Activated T-helper 2 cell treated with anti-CD3 and anti-CD28 coated beads, Interferon-gamma antibody, Interleukin-2, Interleukin-4, amounts not matched to agents 10 μg/mL and 5 μg/mL and 100 μg/mL, durations not matched to agents 14 hours and 24 hours and 36 hours (primary cell): ENCODE measurements at regions of chr5 and their contacts with region 1.

Region 1: DNA sequence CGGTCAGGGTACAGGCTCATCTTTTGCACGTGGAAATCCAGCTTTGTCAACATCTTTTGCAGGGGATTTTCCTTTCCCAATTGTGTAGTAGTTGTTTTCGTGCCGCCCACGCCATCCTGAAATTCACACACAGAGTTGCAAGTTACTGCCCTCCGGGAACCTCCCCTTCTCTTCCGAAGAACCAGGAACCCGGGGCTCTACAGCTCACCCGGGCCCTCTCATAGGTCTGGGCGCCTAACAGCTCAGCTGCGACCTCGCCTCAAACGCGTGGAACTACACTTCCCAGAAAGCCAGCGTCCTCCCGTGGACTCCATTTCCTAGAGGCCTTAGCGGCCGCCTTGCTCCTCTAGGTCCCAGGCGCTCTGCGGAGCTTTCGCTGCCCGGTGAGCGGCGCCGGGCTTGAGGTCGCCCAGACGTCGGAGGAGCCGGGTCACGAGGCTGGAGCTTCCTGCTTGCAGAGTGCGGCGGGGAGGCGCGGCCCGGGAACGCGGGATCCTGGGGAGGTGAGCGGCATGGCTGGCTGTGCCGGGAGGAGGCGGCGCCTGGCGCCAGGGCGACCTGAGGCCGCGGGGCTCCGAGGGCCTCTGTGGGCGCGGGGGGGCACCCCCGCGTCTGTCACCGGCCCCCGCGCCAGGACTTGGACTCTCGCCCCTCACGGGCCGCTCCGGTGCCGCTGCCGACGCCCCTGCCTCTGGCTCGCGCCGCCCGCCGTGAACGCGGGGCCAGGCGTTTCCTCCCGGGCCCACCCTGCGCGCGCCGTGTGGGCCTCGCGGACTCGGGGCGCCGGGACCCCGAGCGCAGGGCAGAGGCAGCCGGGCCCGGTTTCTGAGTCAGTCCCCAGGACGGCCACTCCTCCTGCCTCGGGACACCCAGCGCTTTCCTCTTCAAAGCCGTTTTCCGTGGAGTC is at the start of gene ZNF354B:
- DNase-seq: peak; percentile 78
- H3K4me3 Mint-ChIP-seq: peak within 1 kb of the TSS; percentile 85
- H3K27ac Mint-ChIP-seq: peak within 1 kb of the TSS; percentile 64
- H3K4me1 Mint-ChIP-seq: peaks cover 18% of the 10 kb centered on the region
- H3K27me3 Mint-ChIP-seq: no peaks in the 10 kb centered on the region
- total RNA-seq, gene ZNF354B: 13.8 and 16.4 TPM in 2 replicates

Region 2: GRCh38 chr5:178766936-178767912 is 92.7 kb before region 1 on chr5:
- intact Hi-C with region 1: no loop called
- DNase-seq: no peak
- H3K4me3 Mint-ChIP-seq: no peak overlapping the region
- H3K27ac Mint-ChIP-seq: no peak overlapping the region
- H3K4me1 Mint-ChIP-seq: no peaks in the 10 kb centered on the region
- H3K27me3 Mint-ChIP-seq: no peaks in the 10 kb centered on the region

Region 3: GRCh38 chr5:179023528-179024430 is 163.9 kb after region 1 on chr5 and contains the start of gene ZNF879:
- intact Hi-C with region 1: loop called (anchors 2 kb)
- DNase-seq: peak; percentile 90
- H3K4me3 Mint-ChIP-seq: peak within 1 kb of the TSS; percentile 91
- H3K27ac Mint-ChIP-seq: peak within 1 kb of the TSS; percentile 74
- H3K4me1 Mint-ChIP-seq: peaks cover 5% of the 10 kb centered on the region
- H3K27me3 Mint-ChIP-seq: peaks cover 3% of the 10 kb centered on the region
- total RNA-seq, gene ZNF879: 1.9 and 2.3 TPM in 2 replicates